ENCODE measurements at regions of chr16 and their contacts with region 1.

Region 1: DNA sequence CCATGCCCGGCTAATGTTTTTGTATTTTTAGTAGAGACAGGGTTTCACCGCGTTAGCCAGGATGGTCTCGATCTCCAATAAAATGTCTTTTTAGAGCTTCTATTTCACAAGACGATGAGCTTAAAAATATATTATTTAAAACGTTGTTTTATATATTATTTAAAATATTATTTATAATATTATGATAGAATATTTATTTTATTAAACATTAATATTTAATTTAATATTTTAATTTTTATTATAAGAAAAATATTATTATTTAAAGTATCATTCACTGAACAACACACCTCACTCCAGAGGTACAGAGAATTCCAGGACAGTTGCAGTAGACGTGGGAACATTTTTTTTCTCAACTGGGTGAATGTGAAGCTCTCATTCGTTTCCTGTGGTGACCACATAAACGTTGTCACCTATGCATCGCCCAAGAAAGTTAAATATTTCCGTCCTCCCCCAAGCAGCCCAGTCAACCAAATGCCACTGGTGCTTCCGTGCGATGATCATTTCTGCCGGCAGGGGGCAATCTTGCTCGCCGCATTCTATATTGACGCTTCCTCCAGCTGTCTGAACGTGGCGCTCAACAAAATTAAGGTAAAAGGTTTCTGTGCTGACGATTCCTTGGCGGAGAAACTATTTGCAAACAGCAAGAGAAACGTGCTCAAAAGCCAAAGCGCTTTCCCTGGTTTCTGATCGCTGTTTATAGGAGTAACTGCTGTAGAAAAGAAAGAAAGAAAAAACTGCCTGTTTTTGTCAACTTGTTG is 41.7 kb upstream of the PRSS54 start:
- DNase-seq: peak; percentile 30
- H3K4me3 ChIP-seq: peak overlapping the region; percentile 38
- H3K27ac ChIP-seq: no peak overlapping the region
- H3K27me3 ChIP-seq: peaks cover under 1% of the 10 kb centered on the region
- CTCF ChIP-seq: peak; percentile 96

Region 2: DNA sequence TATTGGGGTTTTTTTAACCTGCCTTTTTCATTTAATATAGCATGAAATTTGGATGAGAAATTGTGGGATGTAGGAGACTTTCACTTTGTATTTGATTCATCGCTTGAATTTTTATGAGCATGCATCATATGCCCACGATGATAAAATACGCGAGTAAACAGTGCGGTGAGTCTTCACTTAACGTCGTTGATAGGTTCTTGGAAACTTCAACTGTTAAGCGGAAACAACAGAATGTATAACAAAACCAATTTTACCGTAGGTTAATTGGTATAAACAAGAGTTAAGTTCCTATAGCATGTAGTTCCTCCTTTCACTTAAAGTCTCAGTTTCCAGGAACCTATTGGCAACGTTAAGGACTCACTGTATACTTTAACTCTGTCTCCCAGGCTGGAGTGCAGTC is 282.2 kb before region 1 on chr16:
- CTCF ChIA-PET with region 1: no interaction called
- POLR2A ChIA-PET with region 1: no interaction called
- DNase-seq: no peak
- H3K4me3 ChIP-seq: no peak overlapping the region
- H3K27ac ChIP-seq: no peak overlapping the region
- H3K27me3 ChIP-seq: peaks cover 9% of the 10 kb centered on the region
- CTCF ChIP-seq: no peak

Region 3: GRCh38 chr16:58299757-58300349 is 36.7 kb before region 1 on chr16:
- CTCF ChIA-PET with region 1: interaction called, 11 read pairs
- POLR2A ChIA-PET with region 1: no interaction called
- DNase-seq: no peak
- H3K4me3 ChIP-seq: no peak overlapping the region
- H3K27ac ChIP-seq: no peak overlapping the region
- H3K27me3 ChIP-seq: no peaks in the 10 kb centered on the region
- CTCF ChIP-seq: peak; percentile 53

Region 4: DNA sequence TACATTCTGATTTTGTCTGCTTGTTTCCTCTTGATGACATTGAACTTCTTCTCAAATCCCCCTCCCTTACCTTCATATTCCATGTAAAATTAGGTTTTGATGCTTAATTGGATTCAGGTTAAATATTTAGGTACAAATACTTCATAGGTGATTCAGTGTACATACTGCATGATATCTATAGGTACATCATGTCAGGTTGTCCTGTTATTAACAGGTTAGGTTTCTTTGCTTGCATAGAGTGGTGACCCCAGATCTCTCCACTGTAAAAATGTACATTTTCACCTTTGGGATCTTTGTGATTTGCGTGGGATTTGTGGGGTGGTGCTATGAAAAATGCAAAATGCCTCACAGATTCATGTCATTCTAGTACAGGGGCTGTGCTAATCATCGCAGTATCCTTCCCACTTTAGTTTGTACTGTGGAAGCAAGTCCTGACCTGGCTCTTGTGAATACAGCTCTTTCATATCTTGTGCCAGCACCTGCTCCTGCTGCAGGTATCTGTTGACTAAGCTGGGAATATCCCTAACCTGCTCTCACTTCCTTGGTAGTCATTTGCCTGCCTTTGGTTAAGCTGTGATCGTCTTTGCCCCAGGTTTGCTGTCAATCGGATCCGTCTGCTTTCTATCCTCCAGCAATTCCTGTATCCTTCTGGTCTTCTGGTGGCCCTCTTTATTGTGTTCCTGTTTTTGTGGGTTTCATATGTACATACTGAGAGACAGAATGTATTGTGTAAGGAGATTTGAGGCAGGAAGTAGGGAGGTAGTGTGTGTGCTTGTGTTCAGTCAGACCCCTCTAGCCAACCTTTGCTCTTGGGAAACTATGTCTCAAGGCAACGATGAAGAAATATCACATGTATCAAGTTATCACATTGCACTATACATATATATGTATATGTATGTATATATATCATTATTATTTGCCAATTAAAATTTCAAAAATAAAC is 47.9 kb after region 1 on chr16:
- CTCF ChIA-PET with region 1: interaction called, 22 read pairs
- POLR2A ChIA-PET with region 1: no interaction called
- DNase-seq: no peak
- H3K4me3 ChIP-seq: no peak overlapping the region
- H3K27ac ChIP-seq: no peak overlapping the region
- H3K27me3 ChIP-seq: peaks cover 3% of the 10 kb centered on the region
- CTCF ChIP-seq: no peak

Region 5: DNA sequence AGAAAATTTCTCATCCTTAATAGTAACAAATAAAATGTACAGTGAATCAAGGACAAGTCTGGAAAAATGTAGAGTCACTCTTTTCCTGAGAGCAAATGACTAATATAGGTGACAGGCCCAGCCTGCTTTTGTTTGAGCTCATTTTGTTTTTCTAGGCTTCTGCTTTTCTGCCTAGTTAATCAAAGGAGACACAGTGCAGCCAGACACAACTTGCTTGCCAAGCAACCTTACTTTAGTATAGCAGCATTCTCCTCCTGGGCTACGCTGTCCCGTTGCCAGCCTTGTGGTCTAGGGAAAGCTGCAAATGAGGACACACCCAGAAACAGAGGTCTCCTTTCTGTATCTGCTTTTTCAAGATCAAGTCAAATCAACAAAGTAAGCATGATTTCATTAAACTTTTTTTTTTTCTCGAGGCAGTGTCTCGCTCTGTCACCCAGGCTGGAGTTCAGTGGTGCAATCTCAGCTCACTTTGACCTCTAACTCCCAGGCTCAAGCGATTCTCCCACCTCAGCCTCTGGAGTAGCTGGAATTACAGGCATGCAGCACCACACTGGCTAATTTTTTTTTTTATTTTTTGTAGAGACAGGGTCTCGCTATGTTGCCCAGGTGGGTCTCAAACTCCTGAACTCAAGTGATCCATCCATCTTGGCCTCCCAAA is 72.9 kb after region 1 on chr16:
- CTCF ChIA-PET with region 1: interaction called, 10 read pairs
- POLR2A ChIA-PET with region 1: no interaction called
- DNase-seq: no peak
- H3K4me3 ChIP-seq: no peak overlapping the region
- H3K27ac ChIP-seq: no peak overlapping the region
- H3K27me3 ChIP-seq: no peaks in the 10 kb centered on the region
- CTCF ChIP-seq: no peak

Region 6: DNA sequence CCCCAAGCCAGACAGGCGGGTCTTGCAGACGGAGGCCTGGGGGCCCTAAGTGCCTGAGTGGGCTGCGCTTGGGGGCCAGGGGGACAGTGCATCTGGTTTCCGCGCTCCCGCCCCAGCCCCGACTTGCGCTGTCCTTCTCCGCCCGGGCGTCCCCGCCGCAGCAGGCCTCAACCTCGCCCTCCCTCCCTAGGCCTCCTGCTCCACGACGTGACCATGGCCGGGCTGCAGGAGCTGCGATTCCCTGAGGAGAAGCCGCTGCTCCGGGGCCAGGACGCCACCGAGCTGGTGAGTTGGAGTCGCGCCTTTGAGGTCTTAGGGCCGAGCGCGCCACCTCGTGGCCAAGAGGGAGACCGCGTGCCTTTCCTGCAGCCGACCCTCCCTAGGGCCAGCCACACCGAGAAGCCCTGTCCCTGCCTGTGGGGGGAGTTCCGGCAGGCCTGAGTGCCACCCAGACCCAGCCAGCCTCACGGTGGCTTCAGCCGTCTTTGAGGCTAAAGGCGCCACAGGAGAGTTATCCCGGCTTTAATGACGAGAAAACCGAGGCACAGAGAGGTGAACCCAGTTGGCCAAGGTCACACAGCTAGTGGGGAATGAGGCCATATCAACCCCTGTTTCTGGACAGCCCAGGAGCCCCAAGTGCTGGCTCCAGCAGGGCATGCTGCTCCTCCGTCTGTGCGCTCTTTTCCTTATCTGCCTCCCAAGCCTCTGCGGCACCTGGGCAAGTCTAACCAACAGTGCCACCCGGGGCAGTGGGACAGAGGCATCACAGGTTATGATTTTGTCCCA is 151.2 kb after region 1 on chr16:
- CTCF ChIA-PET with region 1: interaction called, 210 read pairs
- POLR2A ChIA-PET with region 1: interaction called, 6 read pairs
- DNase-seq: peak; percentile 38
- H3K4me3 ChIP-seq: 0 out of 2 replicates have a peak overlapping the region, but pooled peaks have one; percentile 4
- H3K27ac ChIP-seq: no peak overlapping the region
- H3K27me3 ChIP-seq: peaks cover 11% of the 10 kb centered on the region
- CTCF ChIP-seq: peak; percentile 84

Region 7: GRCh38 chr16:58515125-58515870 is 178.8 kb after region 1 on chr16 and contains the start of gene SETD6:
- CTCF ChIA-PET with region 1: interaction called, 13 read pairs
- POLR2A ChIA-PET with region 1: no interaction called
- DNase-seq: peak; percentile 72
- H3K4me3 ChIP-seq: peak within 1 kb of the TSS; percentile 76
- H3K27ac ChIP-seq: peak within 1 kb of the TSS; percentile 68
- H3K27me3 ChIP-seq: no peaks in the 10 kb centered on the region
- CTCF ChIP-seq: no peak
- polyA plus RNA-seq, gene SETD6: 5.3 and 6.5 TPM in 2 replicates

Region 8: GRCh38 chr16:58755989-58756649 is 419.6 kb after region 1 on chr16:
- CTCF ChIA-PET with region 1: interaction called, 51 read pairs
- POLR2A ChIA-PET with region 1: no interaction called
- DNase-seq: peak; percentile 38
- H3K4me3 ChIP-seq: no peak overlapping the region
- H3K27ac ChIP-seq: no peak overlapping the region
- H3K27me3 ChIP-seq: peaks cover 4% of the 10 kb centered on the region
- CTCF ChIP-seq: peak; percentile 83